WTC11 (cell line): ENCODE measurements at regions of chr20 and their contacts with region 1.

Region 1: DNA sequence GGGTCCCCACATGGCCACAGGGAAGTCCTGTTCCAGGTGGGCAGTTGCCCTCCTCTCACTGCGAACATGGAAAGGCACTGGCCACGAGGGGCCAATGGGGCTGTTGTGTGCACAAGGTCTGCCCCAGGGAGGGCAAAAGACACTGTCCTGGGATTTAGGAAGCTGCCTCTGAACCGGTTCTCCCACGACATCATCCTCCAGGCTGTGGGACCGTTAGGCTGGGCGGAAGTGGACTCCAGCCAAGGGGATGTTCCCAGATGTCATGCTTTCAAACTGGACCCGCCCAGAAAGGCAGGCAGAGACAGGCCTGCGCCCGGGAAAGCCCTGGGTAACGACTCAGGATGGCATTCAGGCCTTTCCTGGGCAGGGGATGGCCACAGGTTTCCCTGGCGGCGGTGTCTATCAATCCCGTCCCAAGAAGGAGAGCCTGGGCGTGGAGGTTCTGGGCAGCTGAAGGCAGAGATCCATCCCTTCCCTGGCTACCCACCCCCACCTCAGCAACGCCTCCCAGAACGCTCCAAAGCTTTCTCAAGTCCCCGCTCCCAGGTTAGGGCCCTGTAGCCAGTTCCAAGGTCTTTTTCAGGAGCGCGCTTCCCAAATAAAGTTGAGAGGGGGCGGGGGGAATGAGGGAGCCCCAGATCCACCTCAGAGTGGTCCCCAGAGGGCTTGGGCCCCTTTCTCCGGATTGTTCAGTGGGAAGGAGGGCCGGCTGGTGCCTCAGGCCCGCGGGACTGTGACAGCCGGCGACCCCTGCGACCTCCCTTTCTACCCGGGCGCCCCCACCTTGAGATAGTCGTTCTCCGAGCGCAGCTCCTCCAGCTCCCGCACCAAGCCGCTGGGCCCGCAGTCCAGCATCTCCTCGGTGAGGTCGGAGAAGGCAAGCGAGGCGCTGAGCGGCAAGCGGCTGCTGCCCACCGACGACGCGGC is 13.8 kb upstream of the TLDC2 start:
- DNase-seq: peak; percentile 36
- ATAC-seq: no peak; the same call in 1 of the 2 replicates
- H3K4me3 Mint-ChIP-seq: peak overlapping the region; percentile 68
- H3K27ac Mint-ChIP-seq: no peak overlapping the region
- H3K4me1 Mint-ChIP-seq: peaks cover 46% of the 10 kb centered on the region
- H3K27me3 Mint-ChIP-seq: peaks cover 18% of the 10 kb centered on the region
- CTCF ChIP-seq: no peak

Region 2: DNA sequence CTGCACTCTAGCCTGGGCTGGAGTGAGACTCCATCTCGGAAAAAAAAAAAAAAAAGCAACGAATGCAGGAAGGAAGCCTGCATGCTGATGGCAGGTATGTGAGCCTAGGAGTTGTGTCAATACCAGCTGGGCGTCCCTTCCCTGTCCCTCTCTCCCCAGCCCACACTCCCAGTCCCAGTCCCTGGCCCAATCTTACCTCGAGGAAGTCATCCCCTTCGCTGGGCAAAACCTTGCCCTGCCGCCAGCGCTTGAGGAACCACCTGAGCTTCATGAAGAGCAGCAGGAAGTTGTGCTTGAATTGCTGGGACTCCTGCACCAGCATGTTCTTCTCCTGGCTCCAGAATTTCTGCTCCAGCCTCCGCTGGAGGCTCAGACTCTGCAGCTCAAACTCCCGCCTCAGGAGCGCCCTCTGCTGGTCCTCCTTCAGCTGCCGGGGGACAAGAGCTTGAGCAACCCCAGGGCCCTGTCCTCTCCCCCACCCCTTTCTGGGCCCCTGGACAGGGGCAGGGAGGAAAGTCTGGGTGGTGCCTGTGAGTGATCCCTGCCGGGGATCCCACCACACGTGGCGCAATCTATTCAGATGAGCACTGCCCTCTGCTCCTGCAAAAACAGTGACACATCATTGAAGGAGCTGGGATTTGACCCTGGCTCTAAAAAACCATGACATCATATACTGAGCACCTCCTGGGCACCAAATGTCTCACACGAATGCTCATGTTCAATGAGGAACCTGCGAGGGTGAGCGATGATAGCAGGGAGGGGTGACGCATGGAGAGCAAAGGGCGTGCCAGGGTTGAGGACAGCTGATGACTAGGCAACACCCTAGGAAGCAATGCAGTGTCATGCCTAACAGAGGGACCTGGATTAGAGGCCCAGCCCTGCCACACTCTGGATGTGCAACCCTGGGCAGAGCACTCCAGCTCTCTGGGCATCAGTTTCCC is 53.6 kb before region 1 on chr20:
- CTCF ChIA-PET with region 1: interaction called, 37 read pairs
- POLR2A ChIA-PET with region 1: interaction called, 3 read pairs
- DNase-seq: peak; percentile 84
- ATAC-seq: peak; percentile 74
- H3K4me3 Mint-ChIP-seq: no peak overlapping the region
- H3K27ac Mint-ChIP-seq: peak overlapping the region; percentile 79
- H3K4me1 Mint-ChIP-seq: no peaks in the 10 kb centered on the region
- H3K27me3 Mint-ChIP-seq: no peaks in the 10 kb centered on the region
- CTCF ChIP-seq: peak; percentile 93

Region 3: GRCh38 chr20:36821964-36822437 is 40.1 kb before region 1 on chr20:
- CTCF ChIA-PET with region 1: interaction called, 12 read pairs
- POLR2A ChIA-PET with region 1: no interaction called
- DNase-seq: no peak
- ATAC-seq: peak; percentile 46
- H3K4me3 Mint-ChIP-seq: no peak overlapping the region
- H3K27ac Mint-ChIP-seq: peak overlapping the region; percentile 62
- H3K4me1 Mint-ChIP-seq: peaks cover 28% of the 10 kb centered on the region
- H3K27me3 Mint-ChIP-seq: no peaks in the 10 kb centered on the region
- CTCF ChIP-seq: no peak

Region 4: DNA sequence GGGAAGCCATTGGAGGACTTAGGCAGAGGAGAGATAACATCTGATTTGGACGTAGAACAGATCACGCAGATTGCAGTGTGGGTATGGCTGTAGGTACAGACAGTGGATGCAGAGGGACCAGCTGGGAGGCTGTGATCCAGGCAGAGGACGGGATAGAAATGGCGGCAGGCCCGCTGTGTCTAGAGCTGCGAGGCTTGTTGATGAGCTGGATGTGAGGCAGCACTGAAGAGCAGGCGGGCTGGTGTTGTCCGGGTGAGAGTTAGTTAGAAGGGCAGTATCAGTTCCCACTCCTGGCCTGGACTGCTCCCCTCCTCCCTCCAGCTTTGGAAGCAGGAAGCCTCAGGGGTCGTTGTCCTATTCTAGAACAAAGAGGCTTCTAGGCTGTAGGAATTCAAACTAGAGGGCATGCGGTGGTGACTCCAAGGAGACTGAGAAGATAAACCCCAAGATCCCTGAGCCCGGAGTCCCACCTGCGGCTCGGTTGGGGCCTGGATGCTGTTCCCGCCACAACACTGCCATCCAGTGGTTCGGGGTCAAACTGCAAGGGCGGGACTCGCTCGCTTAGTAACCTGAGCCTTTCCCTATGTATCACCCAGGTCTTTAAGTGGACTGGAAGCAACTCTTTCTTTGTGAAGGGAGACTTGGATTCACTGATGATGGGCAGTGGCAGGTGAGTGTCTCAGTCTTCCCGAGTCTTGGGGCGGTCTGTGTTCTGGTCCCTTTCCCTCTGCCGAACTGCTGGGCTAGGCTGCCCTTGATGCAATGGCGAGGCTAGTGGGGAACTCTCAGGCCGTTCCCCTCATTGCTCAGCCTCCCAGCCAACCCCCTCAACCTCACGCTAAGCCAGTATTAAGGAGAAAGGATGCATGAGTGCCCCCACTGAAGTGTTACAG is 25.0 kb after region 1 on chr20:
- CTCF ChIA-PET with region 1: interaction called, 16 read pairs
- POLR2A ChIA-PET with region 1: interaction called, 3 read pairs
- DNase-seq: peak; percentile 96
- ATAC-seq: peak; percentile 90
- H3K4me3 Mint-ChIP-seq: peak overlapping the region; percentile 36
- H3K27ac Mint-ChIP-seq: peak overlapping the region; percentile 61
- H3K4me1 Mint-ChIP-seq: peaks cover 20% of the 10 kb centered on the region
- H3K27me3 Mint-ChIP-seq: no peaks in the 10 kb centered on the region; the same call in 1 of the 2 replicates
- CTCF ChIP-seq: peak; percentile 96

Region 5: DNA sequence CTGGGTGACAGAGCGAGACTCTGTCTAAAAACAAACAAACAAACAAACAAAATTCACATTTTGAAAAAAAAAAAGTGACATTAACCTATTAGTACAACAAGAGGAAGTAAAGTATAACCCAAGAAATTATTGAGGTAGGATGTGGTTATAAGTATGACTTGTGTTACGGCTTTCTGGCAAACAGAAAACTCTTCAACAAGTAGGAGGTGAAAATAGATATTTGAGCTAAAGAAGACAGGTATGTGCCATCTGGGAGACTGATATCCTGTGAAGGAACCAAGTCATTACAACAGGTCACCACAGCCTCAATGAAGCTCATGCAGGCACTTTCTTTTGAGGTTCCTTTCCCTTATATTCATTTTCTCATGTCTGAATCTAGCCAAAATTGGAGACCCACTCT is 42.6 kb after region 1 on chr20:
- CTCF ChIA-PET with region 1: no interaction called
- POLR2A ChIA-PET with region 1: no interaction called
- DNase-seq: no peak
- ATAC-seq: no peak
- H3K4me3 Mint-ChIP-seq: no peak overlapping the region
- H3K27ac Mint-ChIP-seq: peak overlapping the region; percentile 23; the same call in 1 of the 2 replicates
- H3K4me1 Mint-ChIP-seq: no peaks in the 10 kb centered on the region
- H3K27me3 Mint-ChIP-seq: no peaks in the 10 kb centered on the region
- CTCF ChIP-seq: no peak